Dendritic cell treated with granulocyte-macrophage colony-stimulating factor and Interleukin-4, amounts not matched to agents 40 ng/mL and 50 ng/mL, for 4 days (primary cell): ENCODE measurements at regions of chr9 and their contacts with region 1.

Region 1: DNA sequence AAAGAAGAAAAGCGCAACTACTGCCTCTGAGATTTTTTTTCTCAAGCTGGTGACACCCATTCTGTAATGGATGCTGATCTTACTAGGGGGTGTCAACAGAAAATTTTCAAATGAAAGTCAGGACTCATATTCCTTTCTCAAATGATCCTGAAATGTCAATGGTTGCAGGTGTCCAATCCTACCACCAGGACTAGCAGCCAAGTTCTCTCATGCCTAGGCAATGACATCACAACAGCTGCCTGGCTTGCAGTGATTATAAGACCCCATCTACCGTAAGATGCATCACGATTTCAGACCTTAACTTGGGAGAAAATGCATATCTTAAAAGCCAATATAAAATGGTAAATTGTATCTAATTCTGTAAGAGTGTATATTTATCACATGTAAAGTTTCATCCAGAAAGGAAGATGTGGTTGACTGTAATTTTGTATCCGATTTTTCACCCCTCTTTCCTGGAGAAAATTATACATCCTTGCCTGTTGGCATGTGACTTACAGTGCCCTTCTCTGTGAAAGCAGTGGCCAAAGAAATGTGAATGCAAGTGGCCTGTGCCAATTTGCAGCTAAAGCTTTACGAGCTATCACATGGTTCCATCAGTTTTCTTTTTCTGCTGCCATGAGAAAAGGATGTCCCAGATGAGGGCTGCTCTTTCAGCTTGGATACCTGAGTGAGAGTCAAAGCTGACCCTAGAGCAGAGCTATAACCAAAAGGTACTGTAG is 104.4 kb downstream of the DENND1A start:
- H3K4me3 Mint-ChIP-seq: no peak overlapping the region
- H3K27ac Mint-ChIP-seq: no peak overlapping the region
- H3K4me1 Mint-ChIP-seq: peaks cover 20% of the 10 kb centered on the region
- H3K27me3 Mint-ChIP-seq: no peaks in the 10 kb centered on the region

Region 2: DNA sequence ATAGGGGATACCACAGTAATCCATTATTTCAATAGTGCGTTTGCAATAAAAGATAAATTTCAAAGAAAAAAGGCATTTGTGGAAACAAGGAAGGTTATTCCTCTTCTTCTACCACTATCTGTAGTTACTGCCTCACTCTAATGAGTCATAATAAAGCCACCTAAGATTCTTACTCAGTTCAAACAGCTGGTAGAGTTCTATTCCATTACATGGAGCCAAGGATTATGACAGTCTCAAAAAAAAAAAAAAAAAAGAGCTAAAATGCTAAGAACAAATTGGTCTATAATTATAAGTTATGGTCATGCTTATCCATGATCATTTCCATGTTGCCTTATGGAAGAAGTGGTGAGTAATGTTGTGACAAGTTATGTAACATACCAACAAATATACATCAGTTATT is 58.1 kb after region 1 on chr9:
- intact Hi-C with region 1: loop called (anchors 10 kb)
- H3K4me3 Mint-ChIP-seq: no peak overlapping the region
- H3K27ac Mint-ChIP-seq: no peak overlapping the region
- H3K4me1 Mint-ChIP-seq: peaks cover 41% of the 10 kb centered on the region
- H3K27me3 Mint-ChIP-seq: no peaks in the 10 kb centered on the region